Upper lobe of right lung (tissue), 1 donor: ENCODE measurements at regions of chr1 and their contacts with region 1.

Region 1: DNA sequence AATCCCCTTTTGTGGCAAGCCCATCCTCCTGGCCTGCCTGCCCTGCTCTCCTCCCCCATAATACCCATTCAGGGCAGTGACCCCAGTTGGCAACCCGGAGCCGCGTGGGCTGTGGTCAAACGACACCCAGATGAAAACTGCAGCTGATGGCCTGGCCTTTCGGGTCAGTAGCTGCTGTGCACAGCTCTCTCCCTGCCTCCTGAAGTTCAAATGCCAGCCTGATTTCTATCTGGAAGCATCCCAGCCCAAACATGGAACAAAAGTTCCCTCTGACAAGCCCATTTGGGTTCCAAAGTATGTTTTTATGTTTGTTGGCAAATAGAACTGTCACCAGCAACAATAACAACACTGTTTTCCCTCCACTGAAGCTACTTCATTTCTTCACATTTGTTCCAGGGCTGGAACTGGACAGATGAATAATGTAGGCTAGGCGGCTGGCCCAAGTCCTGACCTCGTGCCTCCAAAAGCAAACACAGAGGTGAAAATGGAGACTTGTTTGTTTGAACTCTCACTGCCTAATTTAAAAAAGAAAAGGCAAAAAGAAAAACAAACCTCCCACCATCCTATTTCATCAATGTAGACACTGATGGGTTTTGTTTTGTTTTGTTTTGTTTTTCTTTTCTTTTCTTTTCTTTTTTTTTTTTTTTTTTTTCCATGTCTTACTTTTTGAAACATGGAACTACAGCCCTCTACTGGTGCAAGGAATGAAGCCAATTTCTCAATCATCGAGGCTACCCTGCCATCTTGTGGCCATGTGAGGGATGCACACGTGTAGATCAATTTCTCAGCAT is 179.0 kb downstream of the ADSS2 start:
- DNase-seq: peak; percentile 63
- ATAC-seq: peak; percentile 98
- H3K4me3 ChIP-seq: no peak overlapping the region
- H3K27ac ChIP-seq: peak overlapping the region; percentile 31
- H3K4me1 ChIP-seq: no peaks in the 10 kb centered on the region
- H3K27me3 ChIP-seq: no peaks in the 10 kb centered on the region
- CTCF ChIP-seq: peak; percentile 96

Region 2: GRCh38 chr1:243343970-243344937 is 928.4 kb before region 1 on chr1:
- intact Hi-C with region 1: loop called (anchors 10 kb)
- DNase-seq: no peak
- ATAC-seq: peak; percentile 75
- H3K4me3 ChIP-seq: no peak overlapping the region
- H3K27ac ChIP-seq: no peak overlapping the region
- H3K4me1 ChIP-seq: no peaks in the 10 kb centered on the region
- H3K27me3 ChIP-seq: no peaks in the 10 kb centered on the region
- CTCF ChIP-seq: peak; percentile 74

Region 3: GRCh38 chr1:244311784-244312532 is 39.3 kb after region 1 on chr1:
- intact Hi-C with region 1: no loop called
- DNase-seq: no peak
- ATAC-seq: no peak
- H3K4me3 ChIP-seq: no peak overlapping the region
- H3K27ac ChIP-seq: no peak overlapping the region
- H3K4me1 ChIP-seq: no peaks in the 10 kb centered on the region
- H3K27me3 ChIP-seq: no peaks in the 10 kb centered on the region
- CTCF ChIP-seq: no peak

Region 4: GRCh38 chr1:244341455-244342450 is 69.1 kb after region 1 on chr1:
- intact Hi-C with region 1: no loop called
- DNase-seq: no peak
- ATAC-seq: peak; percentile 47
- H3K4me3 ChIP-seq: no peak overlapping the region
- H3K27ac ChIP-seq: no peak overlapping the region
- H3K4me1 ChIP-seq: no peaks in the 10 kb centered on the region
- H3K27me3 ChIP-seq: no peaks in the 10 kb centered on the region
- CTCF ChIP-seq: no peak

Region 5: DNA sequence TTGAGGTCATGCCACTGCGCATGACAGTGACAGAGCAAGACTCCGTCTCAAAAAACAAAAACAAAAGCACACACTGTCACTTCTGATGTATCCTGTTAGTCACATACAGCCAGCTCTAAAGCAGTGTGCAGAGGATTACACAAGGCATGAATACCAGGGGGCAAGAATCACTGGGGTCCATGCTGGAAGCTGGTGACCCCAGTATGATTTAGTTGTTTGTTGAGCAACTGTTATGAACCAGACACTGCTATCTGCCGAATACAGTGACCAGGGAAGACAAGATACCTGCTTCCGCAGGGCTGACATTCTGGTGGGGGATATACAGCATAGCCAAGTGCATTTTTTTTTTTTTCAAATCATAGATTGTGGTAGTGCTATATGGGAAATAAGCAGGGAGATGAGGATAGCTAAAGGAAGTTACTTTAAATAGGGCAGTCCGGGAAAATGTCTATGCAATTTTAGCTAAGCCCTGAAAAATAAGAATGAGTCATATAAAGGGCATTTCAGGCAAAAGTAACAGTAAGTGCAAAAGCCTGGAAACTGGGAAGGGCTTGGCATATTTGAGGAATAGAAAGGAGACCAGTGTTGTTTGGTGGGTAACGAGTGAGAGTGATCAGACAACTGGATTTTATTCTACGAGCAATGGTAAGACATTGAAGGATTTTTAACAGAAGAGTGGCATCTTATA is 109.4 kb after region 1 on chr1:
- intact Hi-C with region 1: no loop called
- DNase-seq: no peak
- ATAC-seq: no peak
- H3K4me3 ChIP-seq: no peak overlapping the region
- H3K27ac ChIP-seq: no peak overlapping the region
- H3K4me1 ChIP-seq: no peaks in the 10 kb centered on the region
- H3K27me3 ChIP-seq: no peaks in the 10 kb centered on the region
- CTCF ChIP-seq: no peak

Region 6: GRCh38 chr1:244409701-244410100 is 137.0 kb after region 1 on chr1:
- intact Hi-C with region 1: no loop called
- DNase-seq: no peak
- ATAC-seq: peak; percentile 81
- H3K4me3 ChIP-seq: no peak overlapping the region
- H3K27ac ChIP-seq: no peak overlapping the region
- H3K4me1 ChIP-seq: no peaks in the 10 kb centered on the region
- H3K27me3 ChIP-seq: no peaks in the 10 kb centered on the region
- CTCF ChIP-seq: no peak